ENCODE measurements at regions of chr6 and their contacts with region 1.

Region 1: GRCh38 chr6:132218059-132218696 is 183.1 kb downstream of the MOXD1 start:
- DNase-seq: no peak

Region 2: DNA sequence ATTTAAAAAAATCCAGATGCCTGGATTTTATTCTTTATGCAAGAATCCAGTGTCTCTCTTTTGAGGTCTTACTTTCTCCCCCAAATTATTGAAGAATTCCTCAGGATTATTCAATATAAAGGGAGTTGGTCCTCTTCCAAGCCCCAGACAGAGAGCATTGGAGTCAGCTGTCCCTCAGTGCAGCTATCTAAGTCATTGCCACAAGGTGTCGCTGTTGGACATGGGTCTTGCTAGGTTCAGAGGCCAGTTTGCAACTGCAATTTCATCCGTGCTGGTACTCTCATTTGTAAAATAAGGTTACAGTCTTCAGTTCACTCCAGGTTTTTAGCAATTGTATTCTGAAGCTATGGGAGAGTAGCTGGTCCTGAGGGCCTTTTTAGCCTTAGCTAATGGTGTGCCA is 294.8 kb before region 1 on chr6:
- intact Hi-C with region 1: loop called in 1 of 2 experiments (anchors 5 kb)
- DNase-seq: no peak

Region 3: GRCh38 chr6:131937703-131938631 is 280.2 kb before region 1 on chr6:
- intact Hi-C with region 1: loop called in 1 of 2 experiments (anchors 10 kb)
- DNase-seq: no peak

Region 4: GRCh38 chr6:131982740-131983259 is 235.4 kb before region 1 on chr6:
- intact Hi-C with region 1: no loop called
- DNase-seq: no peak

Region 5: GRCh38 chr6:132161283-132161682 is 56.9 kb before region 1 on chr6:
- intact Hi-C with region 1: loop called in 1 of 2 experiments (anchors 10 kb)
- DNase-seq: no peak

Region 6: GRCh38 chr6:132202574-132202973 is 15.6 kb before region 1 on chr6:
- intact Hi-C with region 1: no loop called
- DNase-seq: no peak

Measured in posterior vena cava (tissue), 2 donors.